ENCODE measurements at regions of chr7 and their contacts with region 1.

Region 1: DNA sequence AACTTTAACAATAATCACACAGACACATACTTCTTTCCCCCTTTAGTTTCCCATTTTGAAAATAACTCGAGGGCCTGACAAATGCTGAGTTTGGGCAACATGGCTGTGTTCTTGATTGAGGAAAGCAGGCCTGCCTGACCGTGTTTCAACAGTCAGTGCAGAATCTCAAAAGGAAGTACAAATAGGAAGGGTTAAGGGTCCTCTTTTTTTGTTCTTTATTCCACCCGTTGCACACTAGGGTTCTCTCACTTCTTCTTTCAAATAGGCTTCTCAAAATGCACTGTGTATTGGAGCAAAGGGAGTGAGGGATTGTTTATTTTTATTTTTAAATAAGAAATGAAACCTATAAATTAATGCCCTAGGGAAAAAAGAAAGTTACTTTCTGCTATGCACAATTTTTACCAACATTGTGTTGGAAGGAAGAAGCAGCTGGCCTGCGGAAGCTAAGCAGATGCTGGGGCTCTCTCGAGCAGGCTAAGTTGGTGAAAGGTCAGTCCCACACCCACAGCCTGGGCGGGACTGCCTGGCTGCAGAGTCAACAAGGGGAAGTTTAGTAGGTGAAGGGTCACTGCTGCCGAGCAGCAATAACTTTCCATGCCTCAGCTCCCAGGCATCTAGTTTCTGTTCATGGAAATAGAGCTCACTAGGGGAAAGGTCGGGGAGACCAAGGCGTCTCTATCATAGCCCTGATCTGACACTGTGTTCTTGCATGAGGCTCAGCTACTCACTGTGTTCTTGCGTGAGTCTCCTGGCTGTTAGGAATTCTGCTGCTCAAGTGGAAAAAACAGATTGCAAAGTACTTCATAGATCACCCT is 12.2 kb upstream of the PDK4 start:
- DNase-seq: peak; percentile 96
- ATAC-seq: peak; percentile 98

Region 2: DNA sequence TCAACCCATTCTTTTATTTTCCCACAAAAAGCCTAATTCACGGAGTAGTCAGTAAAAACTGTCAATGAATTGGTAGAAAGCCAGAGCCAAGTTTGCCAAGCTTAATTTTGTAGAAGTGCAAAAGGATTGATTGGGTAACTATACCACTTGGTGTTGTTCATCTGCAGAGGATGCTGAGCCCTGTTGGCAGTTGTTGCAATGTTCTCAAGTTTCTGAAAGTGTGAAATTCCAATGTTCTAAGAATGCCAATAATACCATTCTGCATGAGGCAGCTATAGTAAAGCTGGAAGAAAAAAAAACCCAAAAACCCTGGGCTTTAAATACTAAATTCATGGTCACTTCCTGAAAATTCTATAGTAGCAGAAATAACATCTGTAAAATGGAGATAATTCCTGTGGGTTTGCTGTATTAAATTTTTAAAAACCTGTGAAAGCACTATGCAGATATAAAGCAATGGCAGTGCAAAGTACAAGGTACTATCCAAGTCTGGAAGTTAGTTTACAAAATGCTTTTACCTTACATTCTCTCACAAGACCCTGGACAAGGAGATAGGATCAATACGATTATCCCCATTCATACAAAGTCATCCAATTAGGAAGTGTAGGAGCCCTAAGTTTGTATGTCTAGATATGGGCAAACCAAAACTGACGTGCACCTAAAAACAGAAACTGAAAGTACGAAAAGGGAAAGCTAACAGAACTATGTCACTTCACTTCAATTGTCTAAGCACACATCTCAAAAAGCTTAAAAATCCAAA is 278.2 kb before region 1 on chr7:
- intact Hi-C with region 1: no loop called
- DNase-seq: no peak
- ATAC-seq: no peak

Region 3: GRCh38 chr7:95411036-95411435 is 197.5 kb before region 1 on chr7:
- intact Hi-C with region 1: no loop called
- DNase-seq: no peak
- ATAC-seq: no peak

Region 4: GRCh38 chr7:95531605-95532219 is 76.9 kb before region 1 on chr7:
- intact Hi-C with region 1: no loop called
- DNase-seq: no peak
- ATAC-seq: no peak

Region 5: GRCh38 chr7:95545078-95545498 is 63.5 kb before region 1 on chr7:
- intact Hi-C with region 1: loop called (anchors 1 kb)
- DNase-seq: no peak
- ATAC-seq: peak; percentile 81

Region 6: DNA sequence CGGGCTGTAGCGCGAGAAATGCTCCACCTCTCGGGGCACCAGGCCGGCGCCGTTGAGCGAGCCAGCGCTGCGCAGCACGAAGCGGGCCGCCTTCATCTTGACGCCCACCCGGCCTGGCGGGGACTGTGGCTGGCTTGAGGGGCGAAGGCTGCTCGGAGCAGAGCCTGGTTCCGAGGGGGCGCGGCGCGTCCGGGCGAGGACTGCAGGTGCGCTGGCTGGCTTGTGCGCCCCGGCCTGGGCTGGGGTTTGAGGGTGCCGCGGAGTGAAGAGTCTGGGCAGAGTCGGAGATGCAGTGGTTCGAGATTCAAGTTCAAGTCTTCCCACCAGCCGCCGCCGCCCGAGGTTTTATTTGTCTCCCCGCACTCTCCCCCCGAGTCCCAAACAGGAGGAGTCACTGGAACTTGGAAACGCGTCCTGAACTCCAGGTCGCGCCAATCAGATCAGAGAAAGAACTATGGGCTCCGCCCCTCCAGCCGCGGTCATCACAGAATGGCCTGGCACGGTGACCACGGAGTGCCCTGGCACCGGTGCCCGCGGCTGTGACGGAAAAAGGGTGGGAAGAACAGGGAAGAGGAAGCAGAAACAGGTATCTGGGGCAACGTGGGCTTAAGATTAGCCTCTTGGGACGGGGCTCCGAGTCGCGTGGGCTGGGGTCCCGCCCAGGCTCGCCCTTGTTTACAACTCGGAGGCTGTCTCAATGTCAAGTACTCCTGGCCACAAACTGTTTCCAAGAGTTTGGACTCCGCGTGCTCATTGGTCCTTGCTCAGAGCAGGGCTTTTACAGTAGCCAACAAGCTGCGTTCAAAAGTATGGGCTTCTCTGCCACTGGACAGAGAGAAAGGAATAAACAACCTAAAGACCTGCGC is 12.1 kb before region 1 on chr7 and contains the start of gene PDK4:
- intact Hi-C with region 1: loop called (anchors 1 kb)
- DNase-seq: peak; percentile 97
- ATAC-seq: peak; percentile 93
- total RNA-seq, gene PDK4: 431 TPM

Region 7: DNA sequence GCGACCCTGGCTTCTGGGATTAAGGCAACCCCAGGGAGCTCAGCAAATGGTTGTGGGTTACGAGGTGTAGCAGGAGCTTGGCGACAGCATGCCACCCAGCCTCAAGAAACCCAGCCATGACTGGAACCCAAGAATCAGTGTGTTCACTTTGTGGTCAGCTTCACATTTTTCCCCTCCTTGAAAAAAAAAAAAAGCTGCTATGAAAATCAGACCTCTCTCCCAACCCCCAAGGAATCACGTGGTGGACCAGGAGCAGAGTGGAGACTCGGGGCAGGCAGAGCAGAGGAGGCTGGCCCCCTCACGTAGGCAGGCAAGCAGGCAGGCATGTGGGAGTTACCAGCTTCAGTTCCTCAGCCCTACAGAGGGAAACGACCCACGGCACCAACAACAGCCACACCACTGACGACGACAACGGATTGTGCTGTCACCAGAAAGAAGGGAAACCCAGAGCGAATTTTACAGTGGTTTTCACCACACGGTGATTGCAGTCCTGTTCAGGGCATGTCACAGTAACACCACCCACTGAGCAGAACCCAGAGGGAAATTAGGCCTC is 510.0 kb after region 1 on chr7:
- intact Hi-C with region 1: no loop called
- DNase-seq: no peak
- ATAC-seq: peak; percentile 23